A673 (cell line): ENCODE measurements at regions of chr2 and their contacts with region 1.

Region 1: DNA sequence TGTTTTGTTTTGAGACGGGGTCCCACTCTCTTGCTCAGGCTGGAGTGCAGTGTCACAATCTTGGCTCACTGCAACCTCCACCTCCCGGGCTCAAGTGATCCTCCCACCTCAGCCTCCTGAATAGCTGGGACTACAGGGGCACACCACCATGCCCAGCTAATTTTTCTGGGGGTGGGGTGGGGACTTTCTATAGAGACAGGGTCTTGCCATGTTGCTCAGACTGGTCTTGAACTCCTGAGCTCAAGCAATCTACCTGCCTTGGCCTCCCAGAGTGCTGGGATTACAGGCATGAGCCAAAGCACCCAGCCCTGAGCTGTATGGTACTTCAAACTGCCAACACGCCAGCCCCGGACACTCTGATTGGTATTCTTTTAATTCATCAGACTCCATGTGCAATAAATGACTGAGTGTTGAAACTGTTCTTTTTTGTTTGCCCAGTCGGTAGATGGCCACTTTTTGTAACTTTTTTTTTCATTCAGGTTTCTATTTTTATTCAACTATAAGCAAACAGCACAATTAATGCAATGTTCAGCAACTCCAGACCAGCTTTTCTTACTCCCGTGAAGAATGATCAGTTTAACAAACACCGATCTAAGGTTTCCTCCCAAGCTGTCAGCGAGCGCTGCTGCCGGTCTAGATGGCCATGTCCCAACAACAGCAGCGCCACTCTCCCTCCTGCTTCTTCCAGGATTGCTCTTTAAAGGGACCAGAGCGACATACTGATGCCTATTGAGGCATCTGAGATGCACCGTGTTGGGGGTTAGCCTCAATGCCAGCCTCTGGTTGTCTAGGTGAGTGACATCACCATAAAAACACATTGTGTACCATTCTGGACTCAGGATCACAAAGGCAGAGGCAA is 12.5 kb upstream of the TGOLN2 start:
- DNase-seq: no peak
- H3K4me3 ChIP-seq: no peak overlapping the region
- H3K27ac ChIP-seq: no peak overlapping the region
- H3K4me1 ChIP-seq: no peaks in the 10 kb centered on the region
- H3K27me3 ChIP-seq: no peaks in the 10 kb centered on the region
- CTCF ChIP-seq: no peak

Region 2: GRCh38 chr2:85132834-85133637 is 207.2 kb before region 1 on chr2 and contains the start of gene TCF7L1:
- CTCF ChIA-PET with region 1: no interaction called
- POLR2A ChIA-PET with region 1: no interaction called
- intact Hi-C with region 1: no loop called
- DNase-seq: peak; percentile 93
- H3K4me3 ChIP-seq: peak within 1 kb of the TSS; percentile 71
- H3K27ac ChIP-seq: peak within 1 kb of the TSS; percentile 55
- H3K4me1 ChIP-seq: peaks cover 18% of the 10 kb centered on the region
- H3K27me3 ChIP-seq: no peaks in the 10 kb centered on the region
- CTCF ChIP-seq: peak; percentile 96
- total RNA-seq, gene TCF7L1: 21.9 and 29.3 TPM in 2 replicates

Region 3: GRCh38 chr2:85580206-85580605 is 239.9 kb after region 1 on chr2:
- CTCF ChIA-PET with region 1: no interaction called
- POLR2A ChIA-PET with region 1: interaction called, 14 read pairs
- intact Hi-C with region 1: no loop called
- DNase-seq: no peak
- H3K4me3 ChIP-seq: no peak overlapping the region
- H3K27ac ChIP-seq: no peak overlapping the region
- H3K4me1 ChIP-seq: peaks cover 7% of the 10 kb centered on the region
- H3K27me3 ChIP-seq: no peaks in the 10 kb centered on the region
- CTCF ChIP-seq: no peak

Region 4: GRCh38 chr2:85707304-85707703 is 367.0 kb after region 1 on chr2:
- CTCF ChIA-PET with region 1: no interaction called
- POLR2A ChIA-PET with region 1: no interaction called
- intact Hi-C with region 1: no loop called
- DNase-seq: peak; percentile 89
- H3K4me3 ChIP-seq: no peak overlapping the region
- H3K27ac ChIP-seq: no peak overlapping the region
- H3K4me1 ChIP-seq: peaks cover 22% of the 10 kb centered on the region
- H3K27me3 ChIP-seq: no peaks in the 10 kb centered on the region
- CTCF ChIP-seq: peak; percentile 94